H1 (cell line): ENCODE measurements at regions of chr21 and their contacts with region 1.

Region 1: DNA sequence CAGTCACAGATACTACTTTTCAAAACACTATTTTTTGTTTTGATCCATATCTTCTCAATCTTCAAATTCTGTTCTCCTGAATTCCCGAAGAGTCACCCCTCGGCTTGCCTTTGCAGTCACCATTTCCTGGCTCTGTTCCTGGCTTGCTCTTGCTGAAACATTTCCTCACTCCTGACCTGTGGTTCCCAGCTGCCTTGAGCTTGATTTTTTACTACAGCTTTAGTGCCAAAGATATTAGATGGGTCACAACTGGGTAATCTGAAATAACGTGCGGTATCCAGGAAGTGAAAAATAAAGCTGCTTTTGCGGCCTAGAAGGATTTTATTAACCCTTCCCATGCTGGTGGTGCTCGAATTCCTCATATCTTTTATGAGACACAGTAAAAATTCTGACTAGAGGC is 318.8 kb downstream of the PCP4 start:
- DNase-seq: no peak
- H3K4me3 ChIP-seq: no peak overlapping the region
- H3K27ac ChIP-seq: no peak overlapping the region
- H3K4me1 ChIP-seq: no peaks in the 10 kb centered on the region
- H3K27me3 ChIP-seq: no peaks in the 10 kb centered on the region
- CTCF ChIP-seq: no peak
- EP300 ChIP-seq: no peak
- POLR2A ChIP-seq: no peak
- RAD21 ChIP-seq: no peak

Region 2: GRCh38 chr21:40173816-40174215 is 12.2 kb before region 1 on chr21:
- CTCF ChIA-PET with region 1: interaction called, 14 read pairs
- POLR2A ChIA-PET with region 1: no interaction called
- DNase-seq: no peak
- H3K4me3 ChIP-seq: no peak overlapping the region
- H3K27ac ChIP-seq: no peak overlapping the region
- H3K4me1 ChIP-seq: no peaks in the 10 kb centered on the region
- H3K27me3 ChIP-seq: no peaks in the 10 kb centered on the region; a peak in 1 of 7 replicates
- CTCF ChIP-seq: peak; percentile 48 to 54 (median 52)
- EP300 ChIP-seq: no peak
- POLR2A ChIP-seq: no peak
- RAD21 ChIP-seq: peak; percentile 45 to 59

Region 3: GRCh38 chr21:40200946-40201345 is 14.9 kb after region 1 on chr21:
- CTCF ChIA-PET with region 1: no interaction called
- POLR2A ChIA-PET with region 1: no interaction called
- DNase-seq: no peak
- H3K4me3 ChIP-seq: no peak overlapping the region
- H3K27ac ChIP-seq: no peak overlapping the region
- H3K4me1 ChIP-seq: no peaks in the 10 kb centered on the region
- H3K27me3 ChIP-seq: no peaks in the 10 kb centered on the region
- CTCF ChIP-seq: no peak
- EP300 ChIP-seq: no peak
- POLR2A ChIP-seq: no peak
- RAD21 ChIP-seq: no peak